ENCODE measurements at regions of chr11 and their contacts with region 1.

Region 1: GRCh38 chr11:65251476-65251875 is 10.3 kb upstream of the POLA2 start:
- DNase-seq: no peak
- ATAC-seq: no peak
- H3K4me3 ChIP-seq: no peak overlapping the region
- H3K27ac ChIP-seq: no peak overlapping the region
- H3K4me1 ChIP-seq: no peaks in the 10 kb centered on the region
- H3K27me3 ChIP-seq: no peaks in the 10 kb centered on the region
- CTCF ChIP-seq: no peak
- EP300 ChIP-seq: no peak
- POLR2A ChIP-seq: no peak
- RAD21 ChIP-seq: no peak

Region 2: DNA sequence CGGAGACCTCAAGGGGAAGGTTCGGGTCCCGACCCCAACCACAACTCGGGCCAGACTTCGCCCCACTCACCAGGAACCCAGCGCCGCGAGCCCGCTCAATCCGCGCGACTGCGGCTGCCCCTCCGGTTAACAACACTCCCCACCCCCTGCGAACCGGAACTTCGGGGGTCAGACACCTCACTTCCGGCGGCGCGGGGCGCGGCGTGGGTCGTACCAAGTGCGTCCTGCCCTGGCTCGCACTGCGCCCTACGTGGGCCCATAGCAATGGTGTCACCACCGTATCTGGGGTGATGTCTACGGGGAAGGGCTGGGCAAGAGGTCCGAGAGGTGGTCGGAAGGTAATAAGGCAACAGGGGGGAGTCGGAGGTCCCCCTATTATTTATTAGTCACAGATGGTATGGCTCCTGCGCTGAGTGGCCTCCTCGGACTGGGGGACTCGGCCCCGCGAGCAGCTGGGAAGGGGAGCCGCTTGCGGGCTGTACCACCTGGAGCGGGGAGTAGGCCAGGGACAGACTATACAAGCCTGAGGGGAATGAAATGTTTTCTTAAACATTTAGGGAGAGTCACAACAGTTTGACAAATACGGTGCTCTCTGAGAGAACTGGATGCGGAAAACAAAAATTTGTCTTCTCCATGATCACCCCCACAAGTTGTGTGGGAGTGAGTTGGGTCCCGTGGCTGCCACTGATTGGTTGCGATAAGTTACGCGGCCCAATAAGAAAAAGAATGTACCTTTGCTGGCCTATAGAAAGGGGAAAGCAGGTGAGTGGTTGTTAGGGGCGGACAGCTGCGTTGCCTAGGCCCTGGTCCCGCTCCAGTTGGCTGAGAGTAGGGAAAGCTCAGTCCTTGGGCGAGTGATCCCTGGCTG is 116.9 kb before region 1 on chr11 and contains the start of gene SYVN1:
- CTCF ChIA-PET with region 1: no interaction called
- POLR2A ChIA-PET with region 1: no interaction called
- RAD21 ChIA-PET with region 1: no interaction called
- SMC1A ChIA-PET with region 1: no interaction called
- in situ Hi-C with region 1: no loop called
- intact Hi-C with region 1: loop called (anchors 10 kb)
- DNase-seq: peak; percentile 89
- ATAC-seq: peak; percentile 91
- H3K4me3 ChIP-seq: peak within 1 kb of the TSS; percentile 99
- H3K27ac ChIP-seq: peak within 1 kb of the TSS; percentile 99
- H3K4me1 ChIP-seq: peaks cover 21% of the 10 kb centered on the region
- H3K27me3 ChIP-seq: no peaks in the 10 kb centered on the region
- CTCF ChIP-seq: 0 out of 6 replicates have a peak, but pooled peaks of 1 of the 3 experiments have one; percentile 1
- EP300 ChIP-seq: 0 out of 4 replicates have a peak, but pooled peaks of 1 of the 2 experiments have one; percentile 35
- POLR2A ChIP-seq: peak; percentile 97
- RAD21 ChIP-seq: no peak
- polyA plus RNA-seq, gene SYVN1: 0.79 to 2.6 TPM

Region 3: GRCh38 chr11:65204646-65205601 is 46.6 kb before region 1 on chr11:
- CTCF ChIA-PET with region 1: interaction called, 6 read pairs
- POLR2A ChIA-PET with region 1: no interaction called
- RAD21 ChIA-PET with region 1: no interaction called
- SMC1A ChIA-PET with region 1: no interaction called
- in situ Hi-C with region 1: no loop called
- intact Hi-C with region 1: loop called (anchors 10 kb)
- DNase-seq: no peak
- ATAC-seq: peak; percentile 90
- H3K4me3 ChIP-seq: no peak overlapping the region
- H3K27ac ChIP-seq: no peak overlapping the region
- H3K4me1 ChIP-seq: no peaks in the 10 kb centered on the region
- H3K27me3 ChIP-seq: no peaks in the 10 kb centered on the region
- CTCF ChIP-seq: peak; percentile 73 to 96 (median 81)
- EP300 ChIP-seq: no peak
- POLR2A ChIP-seq: no peak; the same call in 1 of the 2 replicates
- RAD21 ChIP-seq: peak; percentile 60

Region 4: DNA sequence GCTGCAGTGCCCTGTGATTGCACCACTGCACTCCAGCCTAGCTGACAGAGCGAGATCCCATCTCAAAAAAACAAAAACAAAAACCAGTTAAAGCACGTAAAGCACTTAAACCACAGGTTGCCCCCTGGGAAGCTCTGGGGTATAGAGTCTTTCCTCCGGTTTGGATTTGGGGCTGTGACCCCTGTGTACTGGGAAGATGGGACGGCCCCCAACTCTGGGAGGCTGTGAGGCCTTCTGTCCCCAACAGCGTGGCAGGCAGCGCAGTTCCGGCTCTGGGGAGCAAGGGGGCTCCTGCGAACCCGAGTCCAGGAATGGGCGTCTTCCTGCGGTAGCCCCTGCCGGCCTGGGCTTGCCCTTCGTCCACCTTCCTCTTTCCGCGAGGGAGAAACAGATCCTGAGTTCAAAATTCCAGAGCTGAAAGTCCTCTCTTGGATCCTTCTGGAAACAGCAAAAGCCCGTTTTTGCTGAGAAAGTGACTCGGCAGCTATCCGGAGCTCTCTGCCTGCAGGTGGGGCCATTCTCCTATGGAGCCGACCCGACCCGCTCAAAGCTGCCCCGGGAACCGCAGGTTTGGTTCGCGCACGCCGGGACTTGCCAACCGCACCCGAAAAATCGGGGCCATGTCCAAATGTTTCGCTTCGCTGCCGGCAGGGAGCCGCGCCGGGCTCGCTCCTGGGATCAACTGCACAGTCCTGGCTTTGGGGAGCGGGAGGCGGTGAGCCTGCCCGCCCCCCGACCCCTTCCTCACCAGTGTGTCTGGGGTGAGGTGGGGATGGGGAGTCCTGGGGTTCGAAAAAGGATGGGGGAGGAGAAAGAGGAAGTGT is 26.0 kb before region 1 on chr11:
- CTCF ChIA-PET with region 1: interaction called, 34 read pairs
- POLR2A ChIA-PET with region 1: no interaction called
- RAD21 ChIA-PET with region 1: interaction called, 6 read pairs
- SMC1A ChIA-PET with region 1: interaction called, 14 read pairs
- in situ Hi-C with region 1: no loop called
- intact Hi-C with region 1: no loop called
- DNase-seq: no peak
- ATAC-seq: peak; percentile 92
- H3K4me3 ChIP-seq: peak overlapping the region; percentile 58
- H3K27ac ChIP-seq: no peak overlapping the region; the same call in 1 of the 2 replicates
- H3K4me1 ChIP-seq: peaks cover 11% of the 10 kb centered on the region
- H3K27me3 ChIP-seq: no peaks in the 10 kb centered on the region; a peak in 1 of 4 replicates
- CTCF ChIP-seq: peak; percentile 52 to 63 (median 53)
- EP300 ChIP-seq: no peak
- POLR2A ChIP-seq: 0 out of 2 replicates have a peak, but pooled peaks have one; percentile 28
- RAD21 ChIP-seq: peak; percentile 55

Region 5: DNA sequence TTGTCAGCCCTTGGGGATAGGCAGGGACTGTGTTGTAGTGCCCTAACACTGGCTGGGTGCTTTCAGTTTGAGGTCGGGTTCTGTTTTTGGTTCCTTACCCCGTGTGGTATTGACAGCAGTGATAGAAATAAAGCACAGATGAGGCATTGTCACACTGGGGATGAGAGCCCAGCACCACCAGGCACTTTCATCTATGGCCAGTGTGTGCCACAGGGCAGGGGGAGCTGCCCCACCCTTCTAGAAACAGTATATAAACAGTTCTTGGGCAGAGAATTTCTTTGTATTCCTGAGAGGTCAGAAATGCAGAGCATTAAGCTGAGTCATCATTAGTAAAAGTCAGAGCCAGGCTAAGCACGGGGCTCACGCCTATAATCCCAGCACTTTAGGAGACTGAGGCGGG is 40.1 kb after region 1 on chr11:
- CTCF ChIA-PET with region 1: no interaction called
- POLR2A ChIA-PET with region 1: no interaction called
- RAD21 ChIA-PET with region 1: no interaction called
- SMC1A ChIA-PET with region 1: no interaction called
- in situ Hi-C with region 1: no loop called
- intact Hi-C with region 1: no loop called
- DNase-seq: no peak
- ATAC-seq: peak; percentile 80
- H3K4me3 ChIP-seq: no peak overlapping the region
- H3K27ac ChIP-seq: peak overlapping the region; percentile 87
- H3K4me1 ChIP-seq: peaks cover 16% of the 10 kb centered on the region
- H3K27me3 ChIP-seq: no peaks in the 10 kb centered on the region
- CTCF ChIP-seq: no peak
- EP300 ChIP-seq: no peak
- POLR2A ChIP-seq: no peak
- RAD21 ChIP-seq: no peak

Measured in GM12878 (cell line).